ENCODE measurements at regions of chr15 and their contacts with region 1.

Region 1: DNA sequence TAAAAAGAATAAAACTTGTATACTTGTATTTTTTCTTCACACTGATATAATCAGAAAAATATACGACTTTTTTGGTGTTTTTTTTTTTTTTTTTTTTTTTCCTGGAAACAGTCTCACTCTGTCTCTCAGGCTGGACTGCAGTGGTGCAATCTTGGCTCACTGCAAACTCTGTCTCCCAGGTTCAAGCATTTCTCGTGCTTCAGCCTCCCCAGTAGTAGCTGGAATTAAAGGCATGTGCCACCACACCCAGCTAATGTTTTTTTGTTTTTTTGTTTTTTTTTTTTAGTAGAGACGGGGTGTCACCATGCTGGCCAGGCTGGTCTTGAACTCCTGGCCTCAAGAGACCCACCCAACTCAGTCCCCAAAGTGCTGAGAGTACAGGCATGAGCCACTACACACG is 20.8 kb upstream of the DNAAF4 start:
- DNase-seq: no peak
- H3K4me3 ChIP-seq: no peak overlapping the region
- H3K27ac ChIP-seq: no peak overlapping the region
- H3K4me1 ChIP-seq: no peaks in the 10 kb centered on the region
- H3K27me3 ChIP-seq: no peaks in the 10 kb centered on the region
- CTCF ChIP-seq: no peak

Region 2: GRCh38 chr15:54884312-54884711 is 644.5 kb before region 1 on chr15:
- CTCF ChIA-PET with region 1: no interaction called
- POLR2A ChIA-PET with region 1: no interaction called
- intact Hi-C with region 1: no loop called
- DNase-seq: no peak
- H3K4me3 ChIP-seq: no peak overlapping the region
- H3K27ac ChIP-seq: no peak overlapping the region
- H3K4me1 ChIP-seq: no peaks in the 10 kb centered on the region
- H3K27me3 ChIP-seq: no peaks in the 10 kb centered on the region
- CTCF ChIP-seq: no peak

Region 3: DNA sequence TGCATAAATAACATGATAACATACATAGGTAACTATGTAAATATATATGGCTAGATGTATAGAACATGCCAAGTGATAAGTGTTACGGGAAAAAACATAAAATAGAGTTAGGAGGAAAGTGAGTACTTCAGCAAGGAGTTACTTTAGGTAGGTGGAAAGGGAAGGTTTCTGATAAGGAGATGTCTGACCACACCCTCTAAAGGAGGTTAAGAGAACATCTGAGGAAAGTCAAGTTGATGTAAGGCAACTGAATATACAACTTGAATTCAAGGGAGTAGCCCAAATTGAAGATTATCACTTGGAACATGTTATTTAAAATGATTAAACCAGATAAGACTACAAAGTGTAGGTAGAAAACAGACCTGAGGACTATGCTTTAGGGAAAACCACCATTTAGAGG is 106.7 kb before region 1 on chr15:
- CTCF ChIA-PET with region 1: no interaction called
- POLR2A ChIA-PET with region 1: no interaction called
- intact Hi-C with region 1: no loop called
- DNase-seq: no peak
- H3K4me3 ChIP-seq: no peak overlapping the region
- H3K27ac ChIP-seq: no peak overlapping the region
- H3K4me1 ChIP-seq: no peaks in the 10 kb centered on the region
- H3K27me3 ChIP-seq: no peaks in the 10 kb centered on the region
- CTCF ChIP-seq: no peak

Region 4: DNA sequence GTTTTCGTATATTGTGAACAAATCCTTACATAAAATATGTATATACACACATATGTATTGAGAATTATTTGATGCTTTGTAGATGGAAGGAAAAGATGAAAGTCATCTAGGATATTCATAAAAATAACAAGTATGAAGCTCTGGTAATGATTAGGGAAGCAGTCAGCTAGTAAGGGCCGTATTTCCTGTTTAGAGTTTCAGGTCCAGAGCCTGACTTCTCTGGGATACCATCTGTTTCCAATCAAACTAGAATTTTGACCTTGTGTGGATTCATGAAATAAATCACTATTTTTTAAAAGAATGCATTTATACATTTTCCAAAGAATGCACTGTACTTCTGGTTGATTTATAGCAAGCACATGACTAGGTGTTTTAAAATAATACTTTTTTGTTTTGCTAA is 1691.4 kb after region 1 on chr15:
- CTCF ChIA-PET with region 1: no interaction called
- POLR2A ChIA-PET with region 1: interaction called, 33 read pairs
- intact Hi-C with region 1: no loop called
- DNase-seq: no peak
- H3K4me3 ChIP-seq: no peak overlapping the region
- H3K27ac ChIP-seq: no peak overlapping the region
- H3K4me1 ChIP-seq: no peaks in the 10 kb centered on the region; the same call in 1 of the 2 replicates
- H3K27me3 ChIP-seq: no peaks in the 10 kb centered on the region
- CTCF ChIP-seq: no peak

Measured in PC-9 (cell line).